CD8-positive, alpha-beta memory T cell (primary cell): ENCODE measurements at regions of chr12 and their contacts with region 1.

Region 1: DNA sequence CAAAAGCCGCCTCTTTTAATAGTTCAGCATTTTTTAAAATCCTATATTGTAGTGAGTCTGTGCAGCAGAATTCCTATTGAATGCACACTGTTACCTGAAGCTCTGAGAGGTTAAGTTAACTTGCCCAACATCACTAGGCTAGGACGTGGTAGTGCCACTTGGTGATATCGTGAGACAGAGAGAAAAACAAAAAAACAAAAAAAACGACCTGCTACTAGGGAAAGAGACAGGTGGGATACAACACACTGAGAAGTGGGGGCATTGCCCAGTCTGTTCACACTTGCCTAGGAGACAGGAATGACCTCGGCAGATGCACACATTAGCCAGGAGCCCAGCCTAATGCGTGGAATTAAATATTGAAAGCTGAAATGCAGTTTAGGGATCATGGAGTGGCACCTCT is 129.7 kb upstream of the CCND2 start:
- DNase-seq: peak in 1 of 5 donors; percentile 30
- H3K4me3 ChIP-seq: no peak overlapping the region
- H3K4me3 Mint-ChIP-seq: peak overlapping the region; percentile 1 to 97 (median 58)
- H3K27ac ChIP-seq: no peak overlapping the region
- H3K27ac Mint-ChIP-seq: peak overlapping the region; percentile 2 to 86 (median 80)
- H3K4me1 ChIP-seq: peaks cover 41% of the 10 kb centered on the region
- H3K4me1 Mint-ChIP-seq: peaks cover 56 to 84% (median 72%) of the 10 kb centered on the region in 3 donors
- H3K27me3 ChIP-seq: no peaks in the 10 kb centered on the region
- H3K27me3 Mint-ChIP-seq: peaks cover 0 to 3% of the 10 kb centered on the region in 2 donors

Region 2: DNA sequence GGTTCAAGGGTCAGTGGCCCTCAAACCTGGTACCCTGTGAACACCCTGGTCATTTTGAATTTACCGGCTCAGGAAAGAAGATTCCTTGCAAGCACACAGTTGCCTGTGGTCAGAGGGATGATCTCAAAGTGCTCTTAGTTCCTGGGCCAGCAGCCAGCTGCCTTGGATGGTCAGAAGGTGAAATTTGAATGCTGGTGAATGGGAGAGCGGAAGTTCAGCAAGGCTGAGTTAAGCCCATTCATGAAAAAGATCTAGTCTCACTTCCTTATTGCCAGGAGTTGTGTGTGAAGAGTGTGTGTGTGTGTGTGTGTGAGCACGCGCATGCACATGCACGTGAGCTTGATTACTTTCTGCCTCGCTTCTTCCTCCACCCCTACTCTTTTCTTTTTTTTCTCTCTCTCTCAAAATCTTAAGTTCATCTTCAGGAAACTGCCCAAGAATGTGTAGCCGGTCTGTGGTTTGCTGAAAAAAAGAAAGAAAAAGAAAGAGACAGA is 25.8 kb before region 1 on chr12:
- CTCF ChIA-PET with region 1: interaction called, 12 read pairs
- POLR2A ChIA-PET with region 1: no interaction called
- DNase-seq: peak in 2 of 5 donors; percentile 28 to 36
- H3K4me3 ChIP-seq: peak overlapping the region; percentile 42
- H3K4me3 Mint-ChIP-seq: peak overlapping the region; percentile 44 to 83 (median 55)
- H3K27ac ChIP-seq: no peak overlapping the region
- H3K27ac Mint-ChIP-seq: peak overlapping the region in 7 of 8 donors; percentile 12 to 82 (median 59)
- H3K4me1 ChIP-seq: peaks cover 30% of the 10 kb centered on the region
- H3K4me1 Mint-ChIP-seq: peaks cover 31 to 47% (median 42%) of the 10 kb centered on the region in 3 donors
- H3K27me3 ChIP-seq: no peaks in the 10 kb centered on the region
- H3K27me3 Mint-ChIP-seq: peaks cover 8% of the 10 kb centered on the region in 2 donors

Region 3: GRCh38 chr12:4269279-4269991 is 125.5 kb after region 1 on chr12:
- CTCF ChIA-PET with region 1: interaction called, 37 read pairs
- POLR2A ChIA-PET with region 1: interaction called, 11 read pairs
- DNase-seq: peak; percentile 87 to 95 (median 92)
- H3K4me3 ChIP-seq: peak overlapping the region; percentile 95
- H3K4me3 Mint-ChIP-seq: peak overlapping the region; percentile 93 to 100 (median 99)
- H3K27ac ChIP-seq: peak overlapping the region; percentile 83
- H3K27ac Mint-ChIP-seq: peak overlapping the region; percentile 93 to 100 (median 100)
- H3K4me1 ChIP-seq: peaks cover 12% of the 10 kb centered on the region
- H3K4me1 Mint-ChIP-seq: peaks cover 18 to 37% (median 22%) of the 10 kb centered on the region in 3 donors
- H3K27me3 ChIP-seq: peaks cover 3% of the 10 kb centered on the region
- H3K27me3 Mint-ChIP-seq: peaks cover 4 to 10% of the 10 kb centered on the region in 2 donors